GM12878 (cell line): ENCODE measurements at regions of chr16 and their contacts with region 1.

Region 1: GRCh38 chr16:10964039-10964890 is 19.9 kb downstream of the CLEC16A start:
- DNase-seq: no peak
- ATAC-seq: peak; percentile 62
- H3K4me3 ChIP-seq: peak overlapping the region; percentile 18; the same call in 1 of the 2 replicates
- H3K27ac ChIP-seq: peak overlapping the region; percentile 99
- H3K4me1 ChIP-seq: peaks cover 35% of the 10 kb centered on the region
- H3K27me3 ChIP-seq: no peaks in the 10 kb centered on the region
- CTCF ChIP-seq: peak; percentile 94 to 98 (median 98); a peak in 5 of 6 replicates
- EP300 ChIP-seq: peak; percentile 35 to 38; a peak in 2 of 4 replicates
- POLR2A ChIP-seq: peak; percentile 34; the same call in 1 of the 2 replicates
- RAD21 ChIP-seq: peak; percentile 87

Region 2: GRCh38 chr16:10906914-10907756 is 57.1 kb before region 1 on chr16:
- CTCF ChIA-PET with region 1: no interaction called
- POLR2A ChIA-PET with region 1: no interaction called
- RAD21 ChIA-PET with region 1: no interaction called
- SMC1A ChIA-PET with region 1: no interaction called
- in situ Hi-C with region 1: no loop called
- intact Hi-C with region 1: no loop called
- DNase-seq: no peak
- ATAC-seq: no peak
- H3K4me3 ChIP-seq: no peak overlapping the region
- H3K27ac ChIP-seq: no peak overlapping the region
- H3K4me1 ChIP-seq: peaks cover 7% of the 10 kb centered on the region
- H3K27me3 ChIP-seq: no peaks in the 10 kb centered on the region
- CTCF ChIP-seq: no peak
- EP300 ChIP-seq: no peak
- POLR2A ChIP-seq: no peak
- RAD21 ChIP-seq: no peak

Region 3: GRCh38 chr16:11025120-11025531 is 60.9 kb after region 1 on chr16:
- CTCF ChIA-PET with region 1: interaction called, 5 read pairs
- POLR2A ChIA-PET with region 1: no interaction called
- RAD21 ChIA-PET with region 1: interaction called, 3 read pairs
- SMC1A ChIA-PET with region 1: interaction called, 3 read pairs
- in situ Hi-C with region 1: no loop called
- intact Hi-C with region 1: loop called (anchors 1 kb)
- DNase-seq: peak; percentile 68
- ATAC-seq: peak; percentile 83
- H3K4me3 ChIP-seq: no peak overlapping the region
- H3K27ac ChIP-seq: peak overlapping the region; percentile 66
- H3K4me1 ChIP-seq: peaks cover 15% of the 10 kb centered on the region
- H3K27me3 ChIP-seq: no peaks in the 10 kb centered on the region
- CTCF ChIP-seq: no peak
- EP300 ChIP-seq: 0 out of 4 replicates have a peak, but pooled peaks of 1 of the 2 experiments have one; percentile 30
- POLR2A ChIP-seq: no peak
- RAD21 ChIP-seq: no peak

Region 4: GRCh38 chr16:11181899-11182279 is 217.6 kb after region 1 on chr16:
- CTCF ChIA-PET with region 1: interaction called, 18 read pairs
- POLR2A ChIA-PET with region 1: no interaction called
- RAD21 ChIA-PET with region 1: interaction called, 20 read pairs
- SMC1A ChIA-PET with region 1: interaction called, 4 read pairs
- in situ Hi-C with region 1: no loop called
- intact Hi-C with region 1: loop called (anchors 1 kb)
- DNase-seq: peak; percentile 64
- ATAC-seq: peak; percentile 37
- H3K4me3 ChIP-seq: no peak overlapping the region
- H3K27ac ChIP-seq: peak overlapping the region; percentile 81
- H3K4me1 ChIP-seq: peaks cover 47% of the 10 kb centered on the region
- H3K27me3 ChIP-seq: no peaks in the 10 kb centered on the region
- CTCF ChIP-seq: no peak
- EP300 ChIP-seq: peak in 1 of 2 experiments; percentile 70; a peak in 1 of 4 replicates
- POLR2A ChIP-seq: peak; percentile 15; the same call in 1 of the 2 replicates
- RAD21 ChIP-seq: no peak

Region 5: GRCh38 chr16:11312718-11313492 is 348.6 kb after region 1 on chr16:
- CTCF ChIA-PET with region 1: interaction called, 10 read pairs
- POLR2A ChIA-PET with region 1: no interaction called
- RAD21 ChIA-PET with region 1: interaction called, 6 read pairs
- SMC1A ChIA-PET with region 1: interaction called, 8 read pairs
- in situ Hi-C with region 1: loop called (anchors 5 kb)
- intact Hi-C with region 1: loop called (anchors 2 kb)
- DNase-seq: no peak
- ATAC-seq: no peak
- H3K4me3 ChIP-seq: no peak overlapping the region
- H3K27ac ChIP-seq: no peak overlapping the region; the same call in 1 of the 2 replicates
- H3K4me1 ChIP-seq: peaks cover 57% of the 10 kb centered on the region
- H3K27me3 ChIP-seq: no peaks in the 10 kb centered on the region; a peak in 1 of 4 replicates
- CTCF ChIP-seq: no peak
- EP300 ChIP-seq: no peak
- POLR2A ChIP-seq: no peak
- RAD21 ChIP-seq: no peak

Region 6: GRCh38 chr16:11342021-11342855 is 378.0 kb after region 1 on chr16:
- CTCF ChIA-PET with region 1: no interaction called
- POLR2A ChIA-PET with region 1: no interaction called
- RAD21 ChIA-PET with region 1: no interaction called
- SMC1A ChIA-PET with region 1: no interaction called
- in situ Hi-C with region 1: no loop called
- intact Hi-C with region 1: no loop called
- DNase-seq: no peak
- ATAC-seq: no peak
- H3K4me3 ChIP-seq: no peak overlapping the region
- H3K27ac ChIP-seq: no peak overlapping the region
- H3K4me1 ChIP-seq: peaks cover 6% of the 10 kb centered on the region
- H3K27me3 ChIP-seq: no peaks in the 10 kb centered on the region
- CTCF ChIP-seq: no peak
- EP300 ChIP-seq: no peak
- POLR2A ChIP-seq: no peak
- RAD21 ChIP-seq: no peak

Region 7: DNA sequence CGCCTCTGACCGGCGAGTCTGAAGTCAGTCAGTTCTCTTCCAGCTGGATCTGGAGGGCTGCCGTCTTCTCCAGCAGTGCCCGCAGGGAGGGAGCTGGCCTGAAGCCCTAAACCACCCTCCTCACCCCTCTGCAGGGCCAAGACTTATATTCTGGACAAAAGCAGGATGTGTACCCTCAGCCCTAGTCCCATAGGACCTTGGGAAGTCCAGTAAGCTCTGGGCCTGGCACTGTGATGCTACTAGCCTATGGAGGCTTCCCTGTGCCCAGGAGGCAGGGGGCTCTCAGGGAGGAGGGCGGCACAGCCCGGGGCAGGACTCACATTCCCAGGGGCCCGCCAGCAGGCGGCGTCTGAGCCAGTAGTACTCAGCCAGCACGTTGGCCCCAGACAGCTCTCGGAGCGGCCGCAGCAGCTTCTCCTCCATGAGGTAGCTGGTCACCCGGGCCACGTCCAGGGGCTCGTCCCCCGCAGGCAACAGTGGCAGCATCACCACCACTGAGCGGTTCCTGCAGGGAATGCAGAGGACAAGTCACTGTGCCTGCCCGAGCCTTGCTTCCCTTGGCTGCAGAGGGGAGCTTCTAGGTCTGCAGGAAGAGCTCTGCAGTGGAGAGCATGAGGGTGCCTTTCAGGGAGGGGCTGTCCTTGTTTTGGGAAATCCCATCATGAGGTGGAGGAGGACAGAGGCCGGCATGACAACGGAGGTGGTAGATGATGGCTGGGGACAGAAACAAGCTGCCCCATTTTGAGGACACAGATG is 422.7 kb after region 1 on chr16:
- CTCF ChIA-PET with region 1: interaction called, 14 read pairs
- POLR2A ChIA-PET with region 1: interaction called, 3 read pairs
- RAD21 ChIA-PET with region 1: interaction called, 4 read pairs
- SMC1A ChIA-PET with region 1: interaction called, 3 read pairs
- in situ Hi-C with region 1: no loop called
- intact Hi-C with region 1: no loop called
- DNase-seq: no peak
- ATAC-seq: peak; percentile 90
- H3K4me3 ChIP-seq: no peak overlapping the region
- H3K27ac ChIP-seq: no peak overlapping the region
- H3K4me1 ChIP-seq: peaks cover 11% of the 10 kb centered on the region
- H3K27me3 ChIP-seq: no peaks in the 10 kb centered on the region
- CTCF ChIP-seq: peak; percentile 47 to 77 (median 65)
- EP300 ChIP-seq: no peak
- POLR2A ChIP-seq: no peak
- RAD21 ChIP-seq: no peak

Region 8: DNA sequence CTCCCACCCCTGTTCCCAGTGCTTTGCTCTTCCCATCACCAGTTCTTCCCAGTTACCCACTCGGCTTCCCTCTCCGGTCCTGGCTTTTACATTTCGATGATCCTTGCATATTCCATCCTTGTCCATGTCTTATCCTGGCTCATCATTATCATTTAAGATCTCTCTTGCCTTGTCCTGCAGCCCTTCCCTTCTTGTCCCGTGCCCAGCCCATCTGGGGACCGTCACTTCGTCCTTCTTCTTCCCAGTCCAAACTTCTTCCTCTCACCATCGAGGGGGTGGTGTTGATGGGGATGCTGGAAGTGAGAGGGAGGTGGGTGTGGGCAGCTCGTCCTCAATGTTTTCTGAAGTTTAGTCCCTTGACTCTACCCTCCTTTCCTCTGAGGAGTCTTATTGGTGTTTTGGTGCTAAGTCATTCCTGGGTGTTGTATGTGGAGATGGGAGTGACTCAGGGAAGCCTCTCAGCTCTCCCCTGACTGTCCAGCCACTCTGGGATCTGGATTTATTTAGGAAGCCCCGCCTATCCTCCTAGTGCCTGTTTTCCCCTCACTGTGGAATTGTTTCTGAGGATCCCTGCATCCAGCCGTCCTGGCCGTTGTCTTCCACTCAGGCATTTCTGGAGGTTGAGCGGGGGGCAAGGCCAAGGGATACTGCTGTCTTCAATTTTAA is 1013.2 kb after region 1 on chr16:
- CTCF ChIA-PET with region 1: interaction called, 4 read pairs
- POLR2A ChIA-PET with region 1: no interaction called
- RAD21 ChIA-PET with region 1: no interaction called
- SMC1A ChIA-PET with region 1: no interaction called
- in situ Hi-C with region 1: loop called (anchors 10 kb)
- intact Hi-C with region 1: no loop called
- DNase-seq: no peak
- ATAC-seq: no peak
- H3K4me3 ChIP-seq: peak overlapping the region; percentile 96
- H3K27ac ChIP-seq: peak overlapping the region; percentile 88
- H3K4me1 ChIP-seq: peaks cover 14% of the 10 kb centered on the region
- H3K27me3 ChIP-seq: no peaks in the 10 kb centered on the region
- CTCF ChIP-seq: no peak
- EP300 ChIP-seq: no peak
- POLR2A ChIP-seq: no peak
- RAD21 ChIP-seq: no peak